ENCODE measurements at regions of chr2 and their contacts with region 1.

Region 1: GRCh38 chr2:225797394-225797793 is 397.9 kb downstream of the NYAP2 start:
- DNase-seq: no peak
- ATAC-seq: no peak
- H3K4me3 ChIP-seq: no peak overlapping the region
- H3K27ac ChIP-seq: no peak overlapping the region
- H3K4me1 ChIP-seq: no peaks in the 10 kb centered on the region
- H3K27me3 ChIP-seq: no peaks in the 10 kb centered on the region
- CTCF ChIP-seq: 0 out of 2 replicates have a peak, but pooled peaks have one; percentile 22

Region 2: GRCh38 chr2:224520064-224520463 is 1277.3 kb before region 1 on chr2:
- CTCF ChIA-PET with region 1: no interaction called
- POLR2A ChIA-PET with region 1: no interaction called
- intact Hi-C with region 1: no loop called
- DNase-seq: peak; percentile 57
- ATAC-seq: peak; percentile 91
- H3K4me3 ChIP-seq: no peak overlapping the region
- H3K27ac ChIP-seq: peak overlapping the region; percentile 19; the same call in 1 of the 2 replicates
- H3K4me1 ChIP-seq: peaks cover 24% of the 10 kb centered on the region
- H3K27me3 ChIP-seq: no peaks in the 10 kb centered on the region
- CTCF ChIP-seq: no peak

Region 3: GRCh38 chr2:225693259-225693658 is 104.1 kb before region 1 on chr2:
- CTCF ChIA-PET with region 1: no interaction called
- POLR2A ChIA-PET with region 1: no interaction called
- intact Hi-C with region 1: loop called (anchors 5 kb)
- DNase-seq: no peak
- ATAC-seq: no peak
- H3K4me3 ChIP-seq: no peak overlapping the region
- H3K27ac ChIP-seq: no peak overlapping the region
- H3K4me1 ChIP-seq: no peaks in the 10 kb centered on the region
- H3K27me3 ChIP-seq: no peaks in the 10 kb centered on the region
- CTCF ChIP-seq: 0 out of 2 replicates have a peak, but pooled peaks have one; percentile 11

Measured in PC-3 (cell line).